ENCODE measurements at regions of chr17 and their contacts with region 1.

Region 1: GRCh38 chr17:75182569-75183450 is at the start of gene SUMO2:
- DNase-seq: peak; percentile 77 to 90 (median 86)
- H3K4me3 ChIP-seq: peak within 1 kb of the TSS; percentile 65 to 98 (median 89)
- H3K27ac ChIP-seq: peak within 1 kb of the TSS; percentile 86 to 100 (median 99)
- H3K27me3 ChIP-seq: no peaks in the 10 kb centered on the region
- CTCF ChIP-seq: peak in 26 of 56 donors; percentile 1 to 53 (median 24)
- total RNA-seq, gene SUMO2: 161 to 320 (median 250) TPM

Region 2: DNA sequence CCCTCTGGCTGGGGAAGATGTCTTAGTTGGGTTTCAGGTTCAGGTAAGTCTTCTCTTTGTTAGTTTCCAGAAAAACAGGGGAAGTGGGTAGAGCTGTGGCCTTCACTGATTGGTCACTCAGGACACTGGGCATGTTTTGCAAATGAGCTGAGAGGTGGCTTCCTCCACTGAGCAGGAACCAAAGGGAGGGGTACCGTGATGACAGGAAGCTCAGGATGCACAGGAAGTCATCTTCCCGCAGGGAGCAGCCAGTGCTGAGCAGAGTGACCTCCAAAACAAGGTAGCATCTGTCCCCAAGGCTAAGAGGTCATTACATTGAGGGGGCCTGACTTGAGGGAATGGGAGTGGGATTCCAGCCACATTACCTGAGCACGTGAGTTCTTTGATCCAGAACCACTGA is 56.8 kb before region 1 on chr17:
- intact Hi-C with region 1: loop called in 1 of 2 experiments (anchors 5 kb)
- DNase-seq: no peak
- H3K4me3 ChIP-seq: no peak overlapping the region
- H3K27ac ChIP-seq: no peak overlapping the region
- H3K27me3 ChIP-seq: no peaks in the 10 kb centered on the region
- CTCF ChIP-seq: no peak

Region 3: DNA sequence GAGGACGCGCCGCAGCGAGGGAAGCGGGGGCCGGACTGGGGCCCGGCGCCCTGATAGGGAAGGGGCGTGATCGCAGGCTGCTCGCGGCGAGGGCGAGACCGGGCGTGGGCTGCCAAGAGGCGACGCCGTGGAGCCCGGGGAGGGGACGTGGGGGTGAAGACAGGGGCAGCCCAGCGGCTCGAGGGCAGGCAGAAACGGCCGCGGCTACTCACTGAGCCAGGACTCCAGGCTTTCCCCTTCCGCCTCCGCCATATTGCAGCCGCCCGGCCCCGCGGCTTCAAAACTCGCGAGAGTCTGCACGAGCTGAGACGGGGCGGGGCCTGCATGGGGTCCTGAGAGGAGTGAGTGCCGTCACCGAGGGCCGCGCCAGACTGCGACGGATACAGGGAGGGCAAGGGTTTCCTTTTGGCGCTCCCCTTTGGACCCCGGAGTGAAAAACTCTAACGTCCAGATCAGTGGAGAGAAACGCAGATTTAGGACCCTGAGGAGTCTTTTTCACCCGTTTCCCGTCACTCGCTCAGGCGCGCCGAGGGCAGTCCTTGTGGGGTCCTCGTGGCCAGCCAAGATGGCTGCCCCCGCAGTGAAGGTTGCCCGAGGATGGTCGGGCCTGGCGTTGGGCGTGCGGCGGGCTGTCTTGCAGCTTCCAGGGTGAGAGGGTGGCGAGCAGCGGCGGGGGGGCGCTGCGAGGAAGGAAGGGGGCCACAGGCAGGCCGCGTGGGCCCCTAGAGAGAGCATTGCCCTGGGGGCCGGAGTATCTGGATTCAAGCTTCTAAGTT is 78.7 kb after region 1 on chr17 and contains the starts of genes GGA3 and MRPS7:
- intact Hi-C with region 1: loop called (anchors 5 kb)
- DNase-seq: peak; percentile 92 to 96 (median 95)
- H3K4me3 ChIP-seq: peak within 1 kb of the TSS; percentile 69 to 100 (median 98)
- H3K27ac ChIP-seq: peak within 1 kb of the TSS; percentile 84 to 100 (median 98)
- H3K27me3 ChIP-seq: no peaks in the 10 kb centered on the region
- CTCF ChIP-seq: peak in 19 of 56 donors; percentile 7 to 55 (median 22)
- total RNA-seq, gene GGA3: 41.9 to 89.7 (median 60.2) TPM
- total RNA-seq, gene MRPS7: 33.7 to 71.4 (median 51.1) TPM